ENCODE measurements at regions of chr1 and their contacts with region 1.

Region 1: DNA sequence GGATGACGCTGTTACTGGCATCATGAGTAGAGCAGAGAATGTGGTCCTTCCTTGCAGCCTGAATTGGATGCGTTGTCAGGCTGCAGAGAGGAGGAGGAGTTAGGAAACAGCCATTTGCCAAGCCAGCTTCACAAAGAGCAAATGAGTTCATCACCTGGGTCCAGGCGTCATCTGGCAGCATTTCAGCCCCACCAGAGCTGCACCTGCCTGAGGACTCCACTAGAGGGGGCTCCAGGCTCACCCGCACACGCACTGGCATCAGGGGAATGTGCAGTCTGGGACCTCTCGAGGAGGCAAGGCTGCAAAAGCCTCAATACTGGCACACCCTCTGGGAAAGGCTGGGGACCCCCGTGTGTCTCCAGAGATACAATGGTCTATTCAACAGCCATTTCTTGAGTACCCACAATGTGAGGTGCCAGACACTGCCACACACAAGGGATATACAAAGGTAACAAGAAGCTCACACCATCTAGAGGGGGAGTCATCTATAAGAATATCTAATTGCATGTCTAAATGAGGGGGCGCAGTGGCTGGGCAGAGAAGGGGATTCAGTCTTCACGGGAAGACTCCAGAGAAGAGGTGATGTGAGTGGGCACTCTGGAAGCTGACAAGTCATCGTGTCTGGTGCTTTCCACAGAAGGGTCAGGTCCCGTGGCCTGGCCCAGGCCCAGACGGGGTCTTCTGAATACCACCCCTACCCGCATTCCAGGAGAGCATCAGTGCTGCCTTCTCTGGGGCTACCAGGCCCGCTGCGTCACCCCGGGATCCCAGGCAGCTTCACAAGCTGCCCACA is 53.5 kb upstream of the CNTN2 start:
- DNase-seq: peak; percentile 75
- H3K4me3 Mint-ChIP-seq: no peak overlapping the region
- H3K27ac Mint-ChIP-seq: no peak overlapping the region
- H3K4me1 Mint-ChIP-seq: peaks cover 7% of the 10 kb centered on the region
- H3K27me3 Mint-ChIP-seq: peaks cover 2% of the 10 kb centered on the region

Region 2: GRCh38 chr1:204072931-204073836 is 916.3 kb before region 1 on chr1 and contains the start of gene SOX13:
- CTCF ChIA-PET with region 1: no interaction called
- POLR2A ChIA-PET with region 1: no interaction called
- intact Hi-C with region 1: no loop called
- DNase-seq: peak; percentile 48
- H3K4me3 Mint-ChIP-seq: peak within 1 kb of the TSS; percentile 78
- H3K27ac Mint-ChIP-seq: no peak within 1 kb of the TSS
- H3K4me1 Mint-ChIP-seq: peaks cover 19% of the 10 kb centered on the region
- H3K27me3 Mint-ChIP-seq: peaks cover 48% of the 10 kb centered on the region
- total RNA-seq, gene SOX13: 4.6 to 5.8 TPM

Region 3: GRCh38 chr1:204445919-204446349 is 543.5 kb before region 1 on chr1:
- CTCF ChIA-PET with region 1: no interaction called
- POLR2A ChIA-PET with region 1: no interaction called
- intact Hi-C with region 1: no loop called
- DNase-seq: peak; percentile 80
- H3K4me3 Mint-ChIP-seq: no peak overlapping the region
- H3K27ac Mint-ChIP-seq: no peak overlapping the region
- H3K4me1 Mint-ChIP-seq: peaks cover 72% of the 10 kb centered on the region
- H3K27me3 Mint-ChIP-seq: no peaks in the 10 kb centered on the region

Region 4: DNA sequence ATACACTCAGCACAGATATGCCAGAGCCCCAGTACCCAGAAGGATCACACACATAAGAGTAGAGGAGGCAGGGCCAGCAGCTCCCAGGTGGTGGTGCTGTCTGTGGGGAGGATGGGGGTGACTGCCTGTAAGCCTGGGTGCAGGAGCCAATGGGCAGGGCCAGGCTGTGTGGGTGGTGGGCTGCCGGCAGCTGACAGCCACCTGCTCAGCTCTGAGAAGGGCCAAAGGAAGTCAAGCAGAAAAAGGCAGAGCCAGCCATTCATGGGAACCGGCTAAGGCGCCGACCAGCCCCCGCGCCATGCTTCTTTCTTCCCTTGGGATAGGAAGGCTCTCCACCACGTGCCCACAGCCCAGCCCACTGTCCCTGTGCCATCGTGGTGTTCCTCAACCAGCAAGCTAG is 508.9 kb before region 1 on chr1:
- CTCF ChIA-PET with region 1: no interaction called
- POLR2A ChIA-PET with region 1: no interaction called
- intact Hi-C with region 1: no loop called
- DNase-seq: no peak
- H3K4me3 Mint-ChIP-seq: no peak overlapping the region
- H3K27ac Mint-ChIP-seq: no peak overlapping the region
- H3K4me1 Mint-ChIP-seq: peaks cover 65% of the 10 kb centered on the region
- H3K27me3 Mint-ChIP-seq: no peaks in the 10 kb centered on the region

Region 5: DNA sequence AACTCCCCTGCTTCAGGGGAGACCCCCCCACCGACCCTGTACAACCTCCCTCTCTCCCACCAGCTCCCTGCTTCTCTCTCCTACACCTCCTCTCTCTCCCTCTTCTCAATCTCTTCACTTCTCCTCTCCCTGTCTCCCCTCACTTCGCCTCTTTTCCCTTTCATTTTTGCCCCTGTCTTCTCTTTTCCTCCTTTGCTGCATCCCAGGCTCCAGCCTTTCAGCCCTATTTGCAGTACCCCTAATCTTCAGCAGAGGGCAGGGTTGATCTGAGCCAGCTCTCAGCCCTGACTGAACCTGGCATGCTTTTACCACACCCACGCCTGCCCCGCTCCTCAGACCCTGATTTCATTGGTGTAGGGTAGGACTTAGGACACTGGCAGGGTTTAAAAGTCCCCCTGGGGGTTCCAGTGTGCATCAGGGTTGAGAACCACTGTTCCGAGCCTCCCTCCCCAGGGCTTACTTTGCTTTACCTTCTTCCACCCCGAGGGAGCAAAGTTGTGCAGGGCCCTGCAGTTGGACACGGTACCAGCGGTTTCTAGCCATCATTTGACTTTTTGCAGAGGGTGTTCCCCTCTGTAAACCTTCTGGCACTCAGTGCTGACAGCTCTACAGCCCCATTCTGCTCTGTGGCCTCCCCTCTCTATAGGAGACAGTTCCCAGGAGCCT is 13.8 kb before region 1 on chr1:
- CTCF ChIA-PET with region 1: interaction called, 34 read pairs
- POLR2A ChIA-PET with region 1: no interaction called
- intact Hi-C with region 1: no loop called
- DNase-seq: peak; percentile 61
- H3K4me3 Mint-ChIP-seq: no peak overlapping the region
- H3K27ac Mint-ChIP-seq: no peak overlapping the region
- H3K4me1 Mint-ChIP-seq: no peaks in the 10 kb centered on the region
- H3K27me3 Mint-ChIP-seq: peaks cover 5% of the 10 kb centered on the region

Region 6: GRCh38 chr1:205098242-205098641 is 108.8 kb after region 1 on chr1:
- CTCF ChIA-PET with region 1: no interaction called
- POLR2A ChIA-PET with region 1: no interaction called
- intact Hi-C with region 1: no loop called
- DNase-seq: no peak
- H3K4me3 Mint-ChIP-seq: no peak overlapping the region
- H3K27ac Mint-ChIP-seq: no peak overlapping the region
- H3K4me1 Mint-ChIP-seq: no peaks in the 10 kb centered on the region
- H3K27me3 Mint-ChIP-seq: no peaks in the 10 kb centered on the region

Measured in activated CD4-positive, alpha-beta memory T cell treated with anti-CD3 and anti-CD28 coated beads for 36 hours (primary cell).